ENCODE measurements at regions of chr5 and their contacts with region 1.

Region 1: DNA sequence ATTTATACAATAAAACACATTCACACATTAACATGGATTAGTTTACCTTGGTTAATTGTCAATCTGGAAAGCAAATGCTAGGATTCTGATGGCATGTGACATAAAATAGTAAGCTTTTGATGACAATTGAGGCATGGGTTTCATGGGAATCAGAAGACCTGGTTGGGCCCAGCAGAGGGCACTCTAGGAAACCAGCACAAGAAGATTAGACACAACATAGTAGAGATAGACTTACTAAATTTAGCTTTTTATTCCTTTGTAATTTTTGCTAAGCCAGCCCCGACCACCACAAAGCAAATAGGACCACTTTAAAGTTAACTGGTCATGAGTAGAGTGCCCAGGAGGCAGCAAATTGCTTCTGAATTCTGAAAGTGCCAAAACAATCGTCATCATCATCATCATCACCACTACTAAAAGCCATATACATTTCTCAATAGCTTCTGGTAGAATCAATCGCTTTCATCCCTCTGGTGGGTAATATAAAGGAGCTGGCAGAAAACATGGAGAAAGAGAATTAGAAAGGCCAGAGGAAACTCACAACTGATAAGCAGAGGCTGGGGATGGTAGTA is 163.2 kb downstream of the ARRDC3 start:
- DNase-seq: no peak
- H3K4me3 ChIP-seq: no peak overlapping the region
- H3K27ac ChIP-seq: peak overlapping the region; percentile 62
- H3K4me1 ChIP-seq: peaks cover 23% of the 10 kb centered on the region
- H3K27me3 ChIP-seq: no peaks in the 10 kb centered on the region
- CTCF ChIP-seq: peak; percentile 52

Region 2: GRCh38 chr5:91192953-91193352 is 26.9 kb before region 1 on chr5:
- CTCF ChIA-PET with region 1: no interaction called
- POLR2A ChIA-PET with region 1: interaction called, 13 read pairs
- intact Hi-C with region 1: no loop called
- DNase-seq: no peak
- H3K4me3 ChIP-seq: no peak overlapping the region
- H3K27ac ChIP-seq: no peak overlapping the region
- H3K4me1 ChIP-seq: peaks cover 13% of the 10 kb centered on the region; the same call in 1 of the 2 replicates
- H3K27me3 ChIP-seq: no peaks in the 10 kb centered on the region
- CTCF ChIP-seq: no peak